IMR-90 (cell line): ENCODE measurements at regions of chr11 and their contacts with region 1.

Region 1: DNA sequence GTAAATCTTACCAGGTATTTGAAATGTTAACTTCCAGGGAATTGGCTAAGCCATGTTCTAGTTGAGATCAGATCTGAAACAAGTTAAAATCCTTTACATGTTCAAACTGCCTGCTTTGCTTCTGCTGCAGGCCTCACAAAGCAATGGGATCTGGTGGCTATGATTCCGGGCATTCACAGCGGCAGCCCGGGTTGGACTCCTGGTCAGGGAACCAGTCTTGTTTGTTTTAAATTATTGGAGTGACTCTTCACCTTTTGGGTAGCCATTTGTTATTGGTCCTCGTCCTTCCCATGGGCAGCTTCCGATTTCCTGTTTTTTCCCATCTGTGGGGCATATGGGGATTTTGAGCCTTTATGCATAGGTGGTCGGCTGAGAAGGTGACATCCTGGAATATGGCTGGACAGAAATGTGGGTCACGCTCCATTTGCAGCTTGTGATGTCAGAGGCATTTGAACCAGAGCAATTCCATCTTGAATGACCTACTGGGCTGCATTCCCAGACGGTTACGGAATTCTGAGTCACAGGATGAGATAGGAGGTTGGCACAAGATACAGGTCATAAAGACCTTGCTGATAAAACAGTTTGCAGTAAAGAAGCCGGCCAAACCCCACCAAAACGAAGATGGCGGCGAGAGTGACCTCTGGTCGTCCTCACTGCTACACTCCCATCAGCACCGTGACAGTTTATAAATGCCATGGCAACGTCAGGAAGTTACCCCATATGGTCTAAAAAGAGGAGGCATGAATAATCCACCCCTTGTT is 20.1 kb upstream of the GSTP1 start:
- DNase-seq: peak; percentile 96
- ATAC-seq: peak; percentile 85
- H3K4me3 ChIP-seq: no peak overlapping the region
- H3K27ac ChIP-seq: no peak overlapping the region
- H3K4me1 ChIP-seq: peaks cover 6% of the 10 kb centered on the region
- H3K27me3 ChIP-seq: no peaks in the 10 kb centered on the region; the same call in 1 of the 2 replicates
- CTCF ChIP-seq: no peak
- POLR2A ChIP-seq: no peak
- RAD21 ChIP-seq: no peak

Region 2: GRCh38 chr11:67534070-67534679 is 29.4 kb before region 1 on chr11:
- CTCF ChIA-PET with region 1: no interaction called
- POLR2A ChIA-PET with region 1: no interaction called
- dilution Hi-C with region 1: no loop called
- in situ Hi-C with region 1: no loop called
- intact Hi-C with region 1: loop called (anchors 1 kb)
- DNase-seq: no peak
- ATAC-seq: no peak
- H3K4me3 ChIP-seq: no peak overlapping the region
- H3K27ac ChIP-seq: no peak overlapping the region
- H3K4me1 ChIP-seq: no peaks in the 10 kb centered on the region
- H3K27me3 ChIP-seq: 0 out of 2 replicates have a peak, but pooled peaks cover 1% of the 10 kb centered on the region
- CTCF ChIP-seq: no peak
- POLR2A ChIP-seq: no peak
- RAD21 ChIP-seq: no peak

Region 3: DNA sequence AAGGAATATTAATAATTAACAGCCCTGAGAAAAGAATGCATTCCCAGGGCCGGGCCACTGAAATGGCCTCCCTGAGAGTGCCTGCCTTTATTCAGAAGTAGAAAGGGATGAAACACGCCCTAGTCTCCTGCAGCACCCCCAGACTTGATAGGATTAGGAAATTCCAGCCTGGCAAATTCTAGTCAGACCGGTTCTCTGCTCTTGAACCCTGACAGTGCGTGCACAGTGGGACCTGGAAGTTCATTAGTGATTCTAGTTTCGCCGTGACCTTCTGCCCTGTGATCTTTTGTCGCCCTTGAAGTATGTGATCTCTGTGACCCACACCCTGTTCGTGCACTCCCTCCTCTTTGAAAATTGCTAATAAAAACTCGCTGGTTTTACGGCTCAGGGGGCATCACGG is 17.9 kb after region 1 on chr11:
- CTCF ChIA-PET with region 1: no interaction called
- POLR2A ChIA-PET with region 1: no interaction called
- dilution Hi-C with region 1: no loop called
- in situ Hi-C with region 1: no loop called
- intact Hi-C with region 1: no loop called
- DNase-seq: no peak
- ATAC-seq: no peak
- H3K4me3 ChIP-seq: no peak overlapping the region
- H3K27ac ChIP-seq: no peak overlapping the region
- H3K4me1 ChIP-seq: peaks cover 14% of the 10 kb centered on the region
- H3K27me3 ChIP-seq: peaks cover 26% of the 10 kb centered on the region
- CTCF ChIP-seq: no peak
- POLR2A ChIP-seq: no peak
- RAD21 ChIP-seq: no peak

Region 4: GRCh38 chr11:68459886-68460740 is 896.6 kb after region 1 on chr11:
- CTCF ChIA-PET with region 1: no interaction called
- POLR2A ChIA-PET with region 1: no interaction called
- dilution Hi-C with region 1: no loop called
- in situ Hi-C with region 1: no loop called
- intact Hi-C with region 1: no loop called
- DNase-seq: peak; percentile 98
- ATAC-seq: peak; percentile 91
- H3K4me3 ChIP-seq: peak overlapping the region; percentile 90
- H3K27ac ChIP-seq: peak overlapping the region; percentile 88
- H3K4me1 ChIP-seq: peaks cover 5% of the 10 kb centered on the region
- H3K27me3 ChIP-seq: peaks cover 3% of the 10 kb centered on the region; the same call in 1 of the 2 replicates
- CTCF ChIP-seq: no peak
- POLR2A ChIP-seq: no peak
- RAD21 ChIP-seq: no peak